Sigmoid colon (tissue), 7 donors: ENCODE measurements at regions of chr1 and their contacts with region 1.

Region 1: GRCh38 chr1:227437495-227438008 is 119.3 kb upstream of the CDC42BPA start:
- DNase-seq: no peak
- H3K4me3 ChIP-seq: peak overlapping the region; percentile 13 to 46 (median 42)
- H3K27ac ChIP-seq: peak overlapping the region in 1 of 4 donors; percentile 50
- H3K4me1 ChIP-seq: peaks cover 0 to 16% (median 15%) of the 10 kb centered on the region in 4 donors
- H3K27me3 ChIP-seq: no peaks in the 10 kb centered on the region
- CTCF ChIP-seq: peak in 1 of 4 experiments; percentile 34
- EP300 ChIP-seq: no peak
- POLR2A ChIP-seq: no peak

Region 2: DNA sequence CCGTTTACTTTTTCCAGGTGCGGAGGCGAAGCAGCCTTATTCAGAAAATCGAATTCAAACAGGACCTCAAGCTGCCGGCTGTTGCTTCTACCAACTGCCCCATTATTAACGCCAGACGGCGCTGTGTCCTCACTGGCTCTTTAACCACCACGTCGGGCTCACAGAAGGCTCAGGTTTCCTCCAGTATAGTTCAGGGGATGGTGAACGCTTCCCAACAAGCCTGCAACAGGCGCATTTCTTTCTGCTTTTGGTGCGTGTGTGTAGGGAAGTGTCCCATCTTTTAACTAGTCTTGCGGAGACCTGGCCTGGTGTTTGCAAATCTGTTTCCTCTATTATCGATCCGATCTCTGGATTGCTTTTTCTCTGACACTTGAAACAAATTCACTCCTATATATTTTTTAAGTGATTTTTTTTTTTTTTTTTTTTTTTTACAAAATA is 889.8 kb before region 1 on chr1:
- intact Hi-C with region 1: loop called (anchors 10 kb)
- DNase-seq: peak; percentile 95
- H3K4me3 ChIP-seq: peak overlapping the region in 3 of 4 donors; percentile 73 to 76 (median 75)
- H3K27ac ChIP-seq: peak overlapping the region; percentile 79 to 93 (median 91)
- H3K4me1 ChIP-seq: peaks cover 0 to 59% (median 43%) of the 10 kb centered on the region in 4 donors
- H3K27me3 ChIP-seq: peaks cover 0 to 8% (median 0%) of the 10 kb centered on the region in 3 donors
- CTCF ChIP-seq: peak; percentile 88 to 92 (median 90)
- EP300 ChIP-seq: no peak
- POLR2A ChIP-seq: peak in 1 of 2 donors; percentile 7

Region 3: GRCh38 chr1:226912587-226913176 is 524.9 kb before region 1 on chr1:
- intact Hi-C with region 1: loop called (anchors 5 kb)
- DNase-seq: peak; percentile 80
- H3K4me3 ChIP-seq: no peak overlapping the region
- H3K27ac ChIP-seq: no peak overlapping the region
- H3K4me1 ChIP-seq: peaks cover 0 to 5% (median 0%) of the 10 kb centered on the region in 4 donors
- H3K27me3 ChIP-seq: no peaks in the 10 kb centered on the region
- CTCF ChIP-seq: peak; percentile 44 to 63 (median 56)
- EP300 ChIP-seq: no peak
- POLR2A ChIP-seq: no peak

Region 4: DNA sequence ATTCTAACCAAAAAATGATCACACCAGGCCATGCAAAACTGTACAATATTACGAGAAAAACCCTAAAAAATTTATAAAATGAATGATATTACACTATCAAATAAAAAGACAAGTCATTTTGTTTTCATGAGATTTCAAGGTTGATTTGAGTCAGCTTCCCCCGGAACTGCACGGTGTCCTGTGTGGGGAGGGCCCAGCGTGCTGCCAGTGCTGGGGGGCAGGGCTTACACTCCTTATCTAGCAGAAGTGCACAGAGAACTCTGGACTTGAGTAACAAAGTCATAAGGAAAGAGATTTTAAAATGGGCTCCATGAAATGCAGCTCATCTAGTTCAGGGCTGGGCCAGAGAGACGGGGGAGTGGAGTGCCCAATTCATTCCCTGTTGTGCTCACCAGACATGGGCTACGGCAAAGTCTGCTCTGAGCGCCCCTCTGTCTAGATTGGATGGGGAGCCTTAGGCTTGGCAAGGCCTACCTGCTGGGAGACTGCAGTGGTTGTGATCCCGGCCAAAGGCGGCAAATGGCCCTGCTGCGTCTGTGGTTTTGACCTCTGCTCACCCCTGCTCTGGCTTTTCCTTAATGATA is 447.3 kb before region 1 on chr1:
- intact Hi-C with region 1: loop called (anchors 5 kb)
- DNase-seq: peak; percentile 62
- H3K4me3 ChIP-seq: no peak overlapping the region
- H3K27ac ChIP-seq: peak overlapping the region; percentile 71 to 79 (median 76)
- H3K4me1 ChIP-seq: peaks cover 0 to 50% (median 39%) of the 10 kb centered on the region in 4 donors
- H3K27me3 ChIP-seq: no peaks in the 10 kb centered on the region
- CTCF ChIP-seq: no peak
- EP300 ChIP-seq: no peak
- POLR2A ChIP-seq: no peak

Region 5: GRCh38 chr1:227127891-227128290 is 309.7 kb before region 1 on chr1:
- intact Hi-C with region 1: loop called (anchors 5 kb)
- DNase-seq: no peak
- H3K4me3 ChIP-seq: no peak overlapping the region
- H3K27ac ChIP-seq: no peak overlapping the region
- H3K4me1 ChIP-seq: no peaks in the 10 kb centered on the region
- H3K27me3 ChIP-seq: no peaks in the 10 kb centered on the region
- CTCF ChIP-seq: no peak
- EP300 ChIP-seq: no peak
- POLR2A ChIP-seq: no peak

Region 6: DNA sequence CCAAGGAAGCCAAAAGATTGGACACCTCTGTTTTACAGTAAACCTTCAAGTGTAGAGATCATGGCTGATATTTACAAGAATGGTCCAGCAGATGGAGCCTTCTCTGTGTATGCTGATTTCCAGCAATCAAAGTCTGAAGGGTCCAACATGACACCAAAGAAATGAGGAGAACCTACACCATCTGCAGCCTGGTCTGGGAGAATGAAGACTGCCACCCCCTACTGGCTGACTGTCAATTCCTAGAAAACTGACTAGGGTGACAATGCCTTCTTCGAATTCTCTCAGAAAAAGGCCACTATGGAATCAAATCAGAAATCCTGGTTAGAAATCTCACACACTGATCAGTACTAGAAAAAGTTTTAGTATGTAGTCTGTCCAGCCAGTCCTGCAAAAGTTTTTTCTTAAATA is 202.6 kb before region 1 on chr1:
- intact Hi-C with region 1: loop called (anchors 5 kb)
- DNase-seq: no peak
- H3K4me3 ChIP-seq: no peak overlapping the region
- H3K27ac ChIP-seq: no peak overlapping the region
- H3K4me1 ChIP-seq: peaks cover 0 to 17% (median 10%) of the 10 kb centered on the region in 4 donors
- H3K27me3 ChIP-seq: no peaks in the 10 kb centered on the region
- CTCF ChIP-seq: peak in 3 of 4 experiments; percentile 20 to 39 (median 21)
- EP300 ChIP-seq: no peak
- POLR2A ChIP-seq: no peak

Region 7: GRCh38 chr1:227318003-227318852 is 119.3 kb before region 1 on chr1 and contains the start of gene CDC42BPA:
- intact Hi-C with region 1: loop called (anchors 2 kb)
- DNase-seq: peak; percentile 94
- H3K4me3 ChIP-seq: peak within 1 kb of the TSS; percentile 65 to 96 (median 85)
- H3K27ac ChIP-seq: peak within 1 kb of the TSS; percentile 86 to 97 (median 96)
- H3K4me1 ChIP-seq: peaks cover 0 to 23% (median 11%) of the 10 kb centered on the region in 4 donors
- H3K27me3 ChIP-seq: no peaks in the 10 kb centered on the region
- CTCF ChIP-seq: no peak
- EP300 ChIP-seq: no peak
- POLR2A ChIP-seq: peak; percentile 38 to 55
- total RNA-seq, gene CDC42BPA: 60.8 to 93.6 (median 66.3) TPM